HEK293T (cell line): ENCODE measurements at regions of chr15 and their contacts with region 1.

Region 1: DNA sequence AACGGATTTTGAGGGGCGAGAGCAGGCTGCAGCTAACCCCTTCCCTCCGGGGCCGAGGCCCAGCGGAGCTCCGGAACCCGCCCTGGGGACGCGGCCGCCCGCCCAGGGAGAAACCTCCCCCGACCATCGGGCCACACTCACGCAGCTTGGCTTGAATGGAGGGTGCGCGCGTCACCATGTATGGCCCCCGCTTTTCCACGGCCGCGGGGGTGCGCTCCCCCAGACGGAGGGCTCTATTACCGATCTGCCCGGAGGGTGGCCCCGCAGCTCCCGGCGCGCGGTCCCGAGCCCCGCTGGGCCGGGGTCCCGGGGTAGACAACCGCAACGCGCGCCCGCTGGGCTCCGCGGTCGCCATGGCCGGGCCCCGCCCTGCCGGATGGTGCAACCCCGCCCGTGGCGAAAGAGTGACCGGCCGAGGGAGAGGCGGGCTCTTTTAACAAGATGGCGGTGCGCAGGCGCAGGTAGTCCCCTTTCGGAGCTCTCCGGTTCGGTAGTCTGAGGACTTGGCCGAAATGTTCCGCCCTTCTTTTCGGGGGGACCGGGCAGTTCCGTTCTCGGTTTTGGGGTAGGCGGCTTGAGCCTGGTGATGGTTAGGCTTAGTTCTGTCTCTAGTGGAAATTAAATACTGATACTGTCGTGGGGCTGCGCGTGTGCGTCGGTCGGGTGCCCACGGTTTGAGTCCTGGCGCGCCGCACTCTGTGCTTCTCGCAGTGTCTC is at the start of gene FAM219B:
- DNase-seq: peak; percentile 98

Region 2: GRCh38 chr15:74878273-74878672 is 28.3 kb before region 1 on chr15:
- CTCF ChIA-PET with region 1: interaction called, 8 read pairs
- POLR2A ChIA-PET with region 1: interaction called, 10 read pairs
- DNase-seq: no peak

Region 3: DNA sequence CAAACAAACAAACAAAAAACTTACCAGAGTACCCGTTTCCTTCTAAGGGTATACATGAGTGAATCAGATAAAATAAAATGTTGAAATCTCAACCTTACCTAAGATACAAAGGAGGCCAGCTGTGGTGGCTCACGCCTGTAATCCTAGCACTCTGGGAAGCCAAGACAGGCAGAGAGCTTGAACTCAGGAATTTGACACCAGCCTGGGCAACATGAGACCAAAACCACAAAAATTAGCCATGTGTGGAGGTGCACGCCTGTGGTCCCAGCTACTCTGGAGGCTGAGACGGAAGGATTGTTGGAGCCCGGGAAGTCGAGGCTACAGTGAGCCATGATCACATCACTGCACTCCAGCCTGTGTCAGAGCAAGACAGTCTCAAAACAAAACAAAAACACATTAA is 11.1 kb after region 1 on chr15:
- CTCF ChIA-PET with region 1: interaction called, 7 read pairs
- POLR2A ChIA-PET with region 1: interaction called, 20 read pairs
- DNase-seq: no peak

Region 4: GRCh38 chr15:74950078-74951000 is 43.7 kb after region 1 on chr15:
- CTCF ChIA-PET with region 1: interaction called, 8 read pairs
- POLR2A ChIA-PET with region 1: interaction called, 12 read pairs
- DNase-seq: peak; percentile 82

Region 5: DNA sequence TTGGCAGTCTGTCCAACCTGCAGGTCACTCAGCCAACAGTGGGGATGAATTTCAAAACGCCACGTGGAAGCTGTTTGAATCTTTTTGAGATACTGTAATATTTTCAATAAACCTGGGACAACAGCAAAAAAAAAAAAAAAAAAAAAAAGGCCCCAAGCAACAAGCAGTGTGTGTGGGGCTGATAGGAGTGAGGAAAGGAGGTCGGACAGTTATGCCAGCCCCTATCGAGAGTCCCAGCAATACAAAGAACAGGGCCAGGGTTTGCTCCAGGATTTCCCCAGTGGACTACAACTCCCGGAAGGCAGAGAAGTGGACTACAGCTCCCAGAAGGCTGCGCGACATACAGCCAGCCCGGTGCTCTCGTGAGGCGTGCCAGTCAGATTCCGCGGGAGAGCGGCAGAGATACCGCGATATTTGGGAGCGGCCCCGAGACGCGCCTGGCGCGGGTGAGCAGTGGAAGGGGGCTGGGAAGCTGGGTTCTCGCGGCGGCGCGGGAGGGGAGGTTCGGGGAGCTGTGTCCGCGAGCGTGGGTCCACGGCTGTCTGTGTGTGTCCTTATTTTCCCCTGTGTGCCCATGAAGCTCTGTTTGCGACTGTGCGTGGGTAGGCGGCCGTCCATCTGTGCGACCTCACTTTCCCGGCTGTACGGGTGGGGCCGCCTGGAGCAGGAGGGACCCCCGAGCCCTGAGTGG is 116.7 kb after region 1 on chr15 and contains the start of gene PPCDC:
- CTCF ChIA-PET with region 1: no interaction called
- POLR2A ChIA-PET with region 1: no interaction called
- DNase-seq: peak; percentile 100

Region 6: DNA sequence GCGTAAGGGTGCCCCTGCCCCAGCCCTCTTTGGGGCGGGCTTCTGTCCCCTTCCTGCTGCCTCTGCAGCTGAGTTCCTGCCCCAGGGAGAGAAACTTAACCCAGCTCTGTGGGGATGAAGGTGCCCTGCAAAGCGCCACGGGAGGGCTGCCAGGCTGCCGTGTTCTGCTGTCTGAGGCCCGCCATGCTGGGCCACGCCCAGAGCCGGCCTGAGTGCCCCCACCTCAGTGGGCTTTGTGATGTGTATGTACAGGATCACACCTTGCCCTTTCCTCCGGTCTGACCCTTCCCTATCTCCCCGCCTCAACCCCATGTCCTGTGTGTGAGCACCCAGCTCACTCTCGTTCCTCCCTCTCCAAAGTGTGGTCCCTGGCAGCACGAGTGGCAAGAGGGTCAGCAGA is 317.7 kb after region 1 on chr15:
- CTCF ChIA-PET with region 1: no interaction called
- POLR2A ChIA-PET with region 1: no interaction called
- DNase-seq: no peak